ENCODE measurements at regions of chr19 and their contacts with region 1.

Region 1: GRCh38 chr19:54738715-54739114 is 402 bp downstream of the KIR2DL3 start:
- DNase-seq: no peak
- ATAC-seq: no peak
- H3K4me3 ChIP-seq: no peak overlapping the region
- H3K27ac ChIP-seq: no peak overlapping the region
- H3K4me1 ChIP-seq: no peaks in the 10 kb centered on the region
- H3K27me3 ChIP-seq: no peaks in the 10 kb centered on the region
- CTCF ChIP-seq: no peak

Region 2: DNA sequence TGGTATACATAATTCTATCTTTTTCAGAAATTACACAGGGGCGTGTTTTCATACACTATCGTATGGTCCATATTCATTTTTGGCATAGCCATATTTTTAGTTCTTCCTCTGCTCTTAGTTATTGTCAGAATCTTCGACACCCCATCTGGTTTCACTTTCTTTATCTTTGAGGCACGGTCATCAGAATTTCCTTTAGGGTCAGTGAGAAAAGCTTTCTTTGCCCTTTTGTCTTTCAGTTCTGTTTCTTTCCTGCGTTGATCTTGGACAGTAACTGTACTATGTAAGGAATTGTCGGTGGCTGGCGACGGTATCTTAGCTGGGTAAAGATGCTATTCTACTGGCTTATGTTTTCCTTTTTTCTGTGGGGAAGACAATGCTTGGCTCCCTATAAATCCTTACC is 54.1 kb after region 1 on chr19:
- intact Hi-C with region 1: no loop called
- DNase-seq: no peak
- ATAC-seq: no peak
- H3K4me3 ChIP-seq: peak overlapping the region; percentile 31
- H3K27ac ChIP-seq: no peak overlapping the region
- H3K4me1 ChIP-seq: no peaks in the 10 kb centered on the region
- H3K27me3 ChIP-seq: no peaks in the 10 kb centered on the region
- CTCF ChIP-seq: no peak

Region 3: GRCh38 chr19:54851353-54851752 is 112.6 kb after region 1 on chr19:
- intact Hi-C with region 1: loop called in 1 of 2 experiments (anchors 5 kb)
- DNase-seq: no peak
- ATAC-seq: no peak
- H3K4me3 ChIP-seq: no peak overlapping the region
- H3K27ac ChIP-seq: no peak overlapping the region
- H3K4me1 ChIP-seq: no peaks in the 10 kb centered on the region
- H3K27me3 ChIP-seq: no peaks in the 10 kb centered on the region
- CTCF ChIP-seq: no peak

Measured in psoas muscle (tissue), 8 donors.